Activated CD4-positive, alpha-beta T cell treated with anti-CD3 and anti-CD28 coated beads for 36 hours (primary cell): ENCODE measurements at regions of chr3 and their contacts with region 1.

Region 1: GRCh38 chr3:4421121-4421520 is 45.9 kb downstream of the SUMF1 start:
- DNase-seq: peak; percentile 49
- ATAC-seq: peak; percentile 89
- H3K4me3 Mint-ChIP-seq: no peak overlapping the region
- H3K27ac Mint-ChIP-seq: peak overlapping the region; percentile 62
- H3K4me1 Mint-ChIP-seq: peaks cover 34% of the 10 kb centered on the region
- H3K27me3 Mint-ChIP-seq: no peaks in the 10 kb centered on the region

Region 2: DNA sequence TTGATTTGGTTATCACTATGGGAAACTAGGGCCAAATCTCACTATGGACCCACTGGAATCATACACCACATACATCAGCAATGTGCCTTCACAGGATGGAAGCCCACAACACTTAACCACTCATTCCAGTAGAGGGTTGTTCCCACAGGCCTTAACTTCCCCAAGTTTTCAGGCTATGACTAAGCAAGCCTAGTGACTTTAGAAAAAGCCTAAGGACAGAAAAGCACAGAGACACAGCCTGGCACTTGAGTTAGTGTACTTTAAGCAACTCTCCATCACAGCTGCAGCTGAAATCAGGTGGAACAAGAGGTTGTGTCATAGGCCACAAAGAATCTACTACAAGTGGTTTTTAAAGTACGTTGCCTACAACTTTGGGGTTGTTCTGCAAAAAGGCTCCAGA is 493.2 kb before region 1 on chr3:
- CTCF ChIA-PET with region 1: no interaction called
- POLR2A ChIA-PET with region 1: no interaction called
- intact Hi-C with region 1: no loop called
- DNase-seq: no peak
- ATAC-seq: no peak
- H3K4me3 Mint-ChIP-seq: no peak overlapping the region
- H3K27ac Mint-ChIP-seq: no peak overlapping the region
- H3K4me1 Mint-ChIP-seq: no peaks in the 10 kb centered on the region
- H3K27me3 Mint-ChIP-seq: no peaks in the 10 kb centered on the region

Region 3: GRCh38 chr3:4387210-4388204 is 33.6 kb before region 1 on chr3:
- CTCF ChIA-PET with region 1: no interaction called
- POLR2A ChIA-PET with region 1: no interaction called
- intact Hi-C with region 1: loop called (anchors 1 kb)
- DNase-seq: no peak
- ATAC-seq: peak; percentile 91
- H3K4me3 Mint-ChIP-seq: peak overlapping the region; percentile 1
- H3K27ac Mint-ChIP-seq: peak overlapping the region; percentile 51
- H3K4me1 Mint-ChIP-seq: peaks cover 37% of the 10 kb centered on the region
- H3K27me3 Mint-ChIP-seq: no peaks in the 10 kb centered on the region

Region 4: GRCh38 chr3:4693620-4694019 is 272.5 kb after region 1 on chr3:
- CTCF ChIA-PET with region 1: no interaction called
- POLR2A ChIA-PET with region 1: interaction called, 12 read pairs
- intact Hi-C with region 1: no loop called
- DNase-seq: no peak
- ATAC-seq: no peak
- H3K4me3 Mint-ChIP-seq: no peak overlapping the region
- H3K27ac Mint-ChIP-seq: no peak overlapping the region
- H3K4me1 Mint-ChIP-seq: no peaks in the 10 kb centered on the region
- H3K27me3 Mint-ChIP-seq: no peaks in the 10 kb centered on the region